A549 (cell line): ENCODE measurements at regions of chr3 and their contacts with region 1.

Region 1: DNA sequence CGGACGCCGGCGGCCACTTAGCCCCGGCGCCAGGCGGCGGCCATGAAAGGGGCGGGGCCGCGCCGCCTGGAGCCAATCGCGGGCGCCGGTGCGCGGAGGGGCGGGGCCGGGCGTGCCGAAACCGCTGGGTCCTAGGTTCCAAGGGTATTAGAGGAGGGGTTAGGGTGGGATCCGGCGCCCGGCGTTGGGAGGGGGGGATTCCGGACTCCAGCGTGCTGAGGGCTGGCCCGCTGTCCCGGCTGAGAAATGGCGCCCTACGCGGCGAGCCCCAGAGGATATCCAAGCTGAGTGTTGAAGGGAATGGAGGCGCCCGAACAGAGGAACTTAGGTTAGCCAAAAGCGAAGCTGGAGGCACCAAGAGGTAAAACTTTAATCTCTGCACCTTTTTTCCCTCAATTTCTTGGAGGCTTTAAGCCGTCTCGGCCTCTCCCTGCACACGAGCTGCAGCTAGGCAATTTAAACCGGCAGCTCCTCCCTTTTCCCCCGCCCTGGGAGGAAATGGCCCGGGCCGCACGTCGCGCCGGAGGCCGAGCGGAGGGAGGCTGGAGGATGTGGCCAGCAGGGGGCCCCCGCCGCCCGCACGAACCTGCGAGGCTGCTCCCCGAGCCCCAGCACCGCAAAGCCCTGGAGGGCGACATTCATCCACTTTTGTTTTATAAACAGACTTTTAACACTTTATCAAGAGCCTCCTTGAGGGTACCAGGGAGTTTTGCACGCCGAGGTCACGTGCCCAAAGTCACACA is at the start of gene XXYLT1:
- DNase-seq: peak; percentile 65 to 86
- ATAC-seq: peak; percentile 87 to 91
- H3K4me3 ChIP-seq: peak within 1 kb of the TSS; percentile 69
- H3K27ac ChIP-seq: peak within 1 kb of the TSS; percentile 87 to 99
- H3K4me1 ChIP-seq: peaks cover 12% of the 10 kb centered on the region
- CTCF ChIP-seq: peak; percentile 93
- EP300 ChIP-seq: no peak
- POLR2A ChIP-seq: no peak; the same call in 1 of the 2 replicates
- RAD21 ChIP-seq: peak; percentile 83 to 97
- polyA plus RNA-seq, gene XXYLT1: 11.5 and 12.0 TPM in 2 replicates

Region 2: GRCh38 chr3:194682694-194683310 is 588.5 kb before region 1 on chr3:
- CTCF ChIA-PET with region 1: interaction called, 59 read pairs
- POLR2A ChIA-PET with region 1: interaction called, 3 read pairs
- DNase-seq: peak; percentile 78 to 81
- ATAC-seq: peak; percentile 65 to 77
- H3K4me3 ChIP-seq: no peak overlapping the region
- H3K27ac ChIP-seq: peak overlapping the region; percentile 39 to 72; a peak in 5 of 6 replicates
- H3K4me1 ChIP-seq: peaks cover 25% of the 10 kb centered on the region
- CTCF ChIP-seq: peak; percentile 85
- EP300 ChIP-seq: no peak
- POLR2A ChIP-seq: no peak
- RAD21 ChIP-seq: peak; percentile 87 to 89

Region 3: DNA sequence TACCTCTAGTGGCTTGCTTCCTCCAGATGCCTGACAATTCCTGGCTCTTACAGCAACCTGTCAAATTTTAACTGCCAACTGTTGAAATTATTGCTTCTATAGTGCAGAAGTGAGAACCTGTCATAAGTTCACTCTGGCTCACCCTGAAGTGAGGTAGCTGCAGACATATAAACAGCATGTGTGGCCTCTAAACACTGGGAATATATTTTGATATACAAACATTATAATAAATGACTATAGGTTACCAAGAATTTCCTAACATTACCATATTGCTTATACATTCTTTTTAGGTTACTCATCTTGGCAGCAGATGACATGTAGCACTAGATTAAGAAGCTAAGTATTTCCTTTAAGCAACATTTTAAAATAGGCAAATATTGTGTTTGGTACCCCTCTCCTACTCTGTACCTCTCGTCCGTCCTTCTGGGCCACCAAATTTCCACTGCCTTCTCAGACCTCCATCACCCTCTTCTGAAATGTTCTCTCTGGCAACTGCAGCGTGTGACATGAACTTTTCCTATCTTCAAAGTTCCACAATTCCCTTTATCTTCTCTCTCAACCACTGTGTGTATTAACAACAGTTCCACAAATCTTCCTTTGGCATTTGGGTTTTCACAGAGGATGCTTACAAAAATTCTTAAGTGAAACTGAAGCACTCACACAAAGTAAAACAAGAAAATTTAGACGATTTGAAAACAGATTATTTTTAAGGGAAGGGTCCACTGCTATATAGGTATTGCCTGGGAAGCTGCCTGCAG is 15.0 kb after region 1 on chr3:
- CTCF ChIA-PET with region 1: interaction called, 14 read pairs
- POLR2A ChIA-PET with region 1: no interaction called
- DNase-seq: no peak
- ATAC-seq: no peak
- H3K4me3 ChIP-seq: no peak overlapping the region
- H3K27ac ChIP-seq: no peak overlapping the region
- H3K4me1 ChIP-seq: peaks cover 9% of the 10 kb centered on the region; the same call in 1 of the 3 replicates
- CTCF ChIP-seq: no peak
- EP300 ChIP-seq: no peak
- POLR2A ChIP-seq: no peak
- RAD21 ChIP-seq: no peak

Region 4: GRCh38 chr3:195442573-195443390 is 171.5 kb after region 1 on chr3 and contains the start of gene ACAP2:
- CTCF ChIA-PET with region 1: interaction called, 15 read pairs
- POLR2A ChIA-PET with region 1: interaction called, 13 read pairs
- DNase-seq: peak; percentile 98
- ATAC-seq: peak; percentile 95 to 96
- H3K4me3 ChIP-seq: peak within 1 kb of the TSS; percentile 99
- H3K27ac ChIP-seq: peak within 1 kb of the TSS; percentile 91 to 95
- H3K4me1 ChIP-seq: peaks cover 22% of the 10 kb centered on the region
- CTCF ChIP-seq: no peak
- EP300 ChIP-seq: no peak
- POLR2A ChIP-seq: peak; percentile 86
- RAD21 ChIP-seq: no peak
- polyA plus RNA-seq, gene ACAP2: 18.7 and 26.0 TPM in 2 replicates

Region 5: DNA sequence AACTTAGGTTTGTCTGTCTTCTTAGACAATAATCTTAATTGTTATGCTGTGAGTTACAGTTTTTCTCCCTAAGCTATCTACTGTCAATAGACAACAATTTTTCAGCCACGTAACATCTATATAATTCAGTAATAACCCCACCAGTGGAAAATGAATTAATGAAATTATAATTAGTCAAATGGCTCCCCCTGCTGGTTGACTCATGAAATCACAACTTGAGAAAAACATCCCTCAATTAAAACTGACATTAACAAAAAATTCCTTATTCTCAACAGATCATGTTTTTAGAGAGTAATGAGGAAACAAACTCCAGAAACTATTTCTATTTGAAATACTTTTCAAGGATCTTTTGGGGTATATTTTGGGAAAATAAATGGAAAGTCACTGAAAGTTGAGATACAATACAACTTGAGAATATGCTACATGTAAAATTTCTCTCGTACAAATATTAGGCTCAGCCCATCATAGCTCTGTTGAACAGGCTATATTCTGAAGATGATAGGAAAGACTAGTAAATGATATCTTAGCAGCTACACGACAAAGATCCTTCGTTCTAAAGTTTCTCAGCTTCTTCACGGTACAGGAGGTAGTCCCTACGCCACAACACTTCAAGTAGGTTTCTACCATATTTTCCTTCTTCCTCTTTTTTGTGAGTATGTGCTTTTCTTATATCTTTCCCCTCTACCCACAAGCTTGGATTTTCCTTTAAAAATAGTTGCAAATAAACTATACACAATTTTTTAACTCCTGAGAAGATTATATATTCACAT is 251.2 kb after region 1 on chr3:
- CTCF ChIA-PET with region 1: interaction called, 186 read pairs
- POLR2A ChIA-PET with region 1: interaction called, 3 read pairs
- DNase-seq: peak; percentile 13 to 43
- ATAC-seq: no peak
- H3K4me3 ChIP-seq: no peak overlapping the region
- H3K27ac ChIP-seq: no peak overlapping the region
- H3K4me1 ChIP-seq: no peaks in the 10 kb centered on the region
- CTCF ChIP-seq: peak; percentile 77
- EP300 ChIP-seq: no peak
- POLR2A ChIP-seq: no peak
- RAD21 ChIP-seq: peak; percentile 69 to 79